HEK293T (cell line): ENCODE measurements at regions of chr18 and their contacts with region 1.

Region 1: GRCh38 chr18:74456017-74456348 is 1.1 kb downstream of the DIPK1C start:
- DNase-seq: no peak

Region 2: GRCh38 chr18:73980289-73980979 is 475.5 kb before region 1 on chr18:
- CTCF ChIA-PET with region 1: interaction called, 10 read pairs
- POLR2A ChIA-PET with region 1: no interaction called
- DNase-seq: peak; percentile 23

Region 3: DNA sequence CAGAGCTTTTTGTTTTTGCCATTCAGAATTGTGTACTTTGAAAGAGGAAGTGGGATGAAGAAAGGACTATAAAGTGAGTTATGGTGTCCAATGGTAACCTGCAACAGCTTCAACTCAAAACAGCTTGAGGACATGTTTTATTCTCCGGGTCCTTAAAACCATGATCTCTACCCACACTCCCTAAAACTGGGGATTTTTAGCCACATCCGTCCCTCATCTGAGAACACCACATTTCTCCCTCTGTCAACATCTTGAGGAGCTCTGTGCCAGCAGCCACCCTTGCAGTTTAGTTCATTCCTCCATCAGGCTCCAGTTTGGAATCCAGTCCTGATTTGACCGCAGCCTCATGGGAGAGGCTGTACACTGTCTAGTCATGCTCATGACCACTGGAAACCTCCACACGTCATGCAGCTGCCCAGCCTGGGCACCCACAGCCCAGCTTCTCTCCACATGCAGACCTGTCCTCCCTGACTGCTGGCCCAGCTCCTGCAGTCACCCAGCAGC is 77.8 kb before region 1 on chr18:
- CTCF ChIA-PET with region 1: no interaction called
- POLR2A ChIA-PET with region 1: no interaction called
- DNase-seq: no peak

Region 4: DNA sequence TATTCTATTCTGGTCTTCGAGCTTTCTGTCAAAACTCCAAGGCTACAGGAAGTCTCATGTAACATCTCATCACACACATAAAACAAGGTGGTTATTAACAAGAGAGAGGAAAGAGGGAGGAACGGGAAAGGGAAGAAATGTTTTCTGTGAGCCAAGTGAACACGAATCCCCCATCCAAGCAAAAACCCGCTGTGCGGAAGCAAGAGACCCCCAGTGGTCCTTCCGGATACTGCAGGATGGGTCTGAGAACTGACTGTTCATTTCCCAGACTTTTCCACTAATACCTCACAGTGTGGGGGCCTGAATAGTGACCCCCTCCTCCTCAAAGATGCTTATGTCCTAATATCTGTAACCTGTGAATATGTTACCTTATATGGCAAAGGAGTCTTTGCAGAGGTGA is 20.2 kb after region 1 on chr18:
- CTCF ChIA-PET with region 1: no interaction called
- POLR2A ChIA-PET with region 1: no interaction called
- DNase-seq: peak; percentile 65

Region 5: DNA sequence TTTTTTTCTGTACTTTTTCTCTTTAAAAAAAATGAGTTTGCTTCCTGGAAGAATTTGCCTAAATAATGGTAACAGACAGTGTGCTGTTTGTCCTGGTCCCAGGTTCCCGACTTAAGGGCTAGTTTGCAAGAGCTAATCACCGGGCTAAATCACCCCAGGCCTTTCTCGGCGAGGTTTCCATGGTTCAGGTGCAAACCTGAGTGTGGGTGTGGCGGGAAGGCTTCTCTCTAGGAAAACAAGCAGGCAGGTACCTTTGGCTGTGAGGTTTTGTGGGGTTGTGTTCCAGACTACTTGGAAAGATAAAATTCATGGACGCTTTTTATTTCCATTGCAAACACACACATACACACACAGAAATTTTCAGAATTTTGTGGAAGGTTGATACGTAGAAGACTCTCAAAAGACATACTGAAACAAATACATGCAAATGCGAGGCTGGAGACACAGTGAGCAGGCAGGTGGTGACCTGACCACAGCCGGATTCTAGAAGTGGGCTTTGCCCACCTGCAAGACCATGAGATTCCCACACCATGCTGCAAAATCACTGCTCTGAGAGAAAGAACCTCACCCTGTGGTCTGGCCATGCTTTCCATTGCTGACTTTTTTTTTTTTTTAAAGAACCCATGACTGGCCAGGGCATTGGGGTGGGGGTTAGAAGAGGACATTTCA is 79.1 kb after region 1 on chr18:
- CTCF ChIA-PET with region 1: no interaction called
- POLR2A ChIA-PET with region 1: no interaction called
- DNase-seq: no peak